ENCODE measurements at regions of chr5 and their contacts with region 1.

Region 1: GRCh38 chr5:174317259-174317894 is 271.9 kb downstream of the NSG2 start:
- DNase-seq: peak; percentile 76
- ATAC-seq: peak; percentile 97
- H3K4me3 Mint-ChIP-seq: no peak overlapping the region
- H3K27ac Mint-ChIP-seq: no peak overlapping the region
- H3K4me1 Mint-ChIP-seq: 0 out of 2 replicates have a peak, but pooled peaks cover 13% of the 10 kb centered on the region
- H3K27me3 Mint-ChIP-seq: peaks cover 22% of the 10 kb centered on the region
- CTCF ChIP-seq: peak; percentile 76

Region 2: DNA sequence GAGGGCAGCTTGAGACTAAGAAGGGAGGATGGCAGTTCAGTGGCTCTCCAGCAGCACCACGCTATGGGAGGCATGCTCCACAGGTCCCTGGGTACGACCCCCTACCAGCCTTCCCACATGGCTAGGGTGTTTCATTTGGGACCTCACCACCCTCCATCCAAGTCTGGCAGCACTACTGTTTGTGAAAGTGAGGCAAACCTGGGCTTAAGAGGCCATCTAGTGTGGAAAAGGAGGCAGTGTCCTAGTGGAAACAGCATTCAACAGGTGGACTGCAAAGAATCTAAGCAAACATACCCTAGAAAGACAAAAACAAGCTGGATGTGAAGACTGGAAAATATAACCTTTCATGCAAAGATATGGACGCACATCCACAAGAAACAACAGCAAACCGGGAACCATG is 333.2 kb before region 1 on chr5:
- CTCF ChIA-PET with region 1: interaction called, 16 read pairs
- POLR2A ChIA-PET with region 1: no interaction called
- DNase-seq: no peak
- ATAC-seq: peak; percentile 82
- H3K4me3 Mint-ChIP-seq: no peak overlapping the region
- H3K27ac Mint-ChIP-seq: no peak overlapping the region
- H3K4me1 Mint-ChIP-seq: peaks cover 16% of the 10 kb centered on the region
- H3K27me3 Mint-ChIP-seq: no peaks in the 10 kb centered on the region
- CTCF ChIP-seq: peak; percentile 40; the same call in 1 of the 2 replicates

Region 3: DNA sequence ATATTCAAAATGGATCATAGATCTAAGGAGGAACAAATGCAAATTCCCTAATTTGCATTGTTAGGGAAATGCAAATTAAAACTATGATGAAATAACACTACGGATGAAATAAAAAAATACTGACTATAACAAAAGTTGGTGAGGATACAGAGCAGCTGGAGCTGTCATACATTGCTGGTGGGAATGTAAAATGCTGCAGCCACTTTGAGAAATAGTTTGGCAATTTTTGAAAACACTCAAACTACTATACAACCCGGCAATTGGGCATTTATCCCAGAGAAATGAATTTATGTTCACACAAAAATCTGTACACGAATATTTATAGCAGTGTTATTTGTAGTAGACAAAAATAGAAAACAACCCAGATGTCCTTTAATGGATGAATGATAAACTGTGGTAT is 305.9 kb before region 1 on chr5:
- CTCF ChIA-PET with region 1: interaction called, 12 read pairs
- POLR2A ChIA-PET with region 1: no interaction called
- DNase-seq: no peak
- ATAC-seq: no peak
- H3K4me3 Mint-ChIP-seq: no peak overlapping the region
- H3K27ac Mint-ChIP-seq: no peak overlapping the region
- H3K4me1 Mint-ChIP-seq: no peaks in the 10 kb centered on the region
- H3K27me3 Mint-ChIP-seq: peaks cover 9% of the 10 kb centered on the region
- CTCF ChIP-seq: no peak

Region 4: GRCh38 chr5:174020397-174021296 is 296.7 kb before region 1 on chr5:
- CTCF ChIA-PET with region 1: interaction called, 22 read pairs
- POLR2A ChIA-PET with region 1: no interaction called
- DNase-seq: peak; percentile 61
- ATAC-seq: peak; percentile 89
- H3K4me3 Mint-ChIP-seq: peak overlapping the region; percentile 82
- H3K27ac Mint-ChIP-seq: peak overlapping the region; percentile 17; the same call in 1 of the 2 replicates
- H3K4me1 Mint-ChIP-seq: peaks cover 27% of the 10 kb centered on the region
- H3K27me3 Mint-ChIP-seq: peaks cover 7% of the 10 kb centered on the region; the same call in 1 of the 2 replicates
- CTCF ChIP-seq: peak; percentile 53

Region 5: DNA sequence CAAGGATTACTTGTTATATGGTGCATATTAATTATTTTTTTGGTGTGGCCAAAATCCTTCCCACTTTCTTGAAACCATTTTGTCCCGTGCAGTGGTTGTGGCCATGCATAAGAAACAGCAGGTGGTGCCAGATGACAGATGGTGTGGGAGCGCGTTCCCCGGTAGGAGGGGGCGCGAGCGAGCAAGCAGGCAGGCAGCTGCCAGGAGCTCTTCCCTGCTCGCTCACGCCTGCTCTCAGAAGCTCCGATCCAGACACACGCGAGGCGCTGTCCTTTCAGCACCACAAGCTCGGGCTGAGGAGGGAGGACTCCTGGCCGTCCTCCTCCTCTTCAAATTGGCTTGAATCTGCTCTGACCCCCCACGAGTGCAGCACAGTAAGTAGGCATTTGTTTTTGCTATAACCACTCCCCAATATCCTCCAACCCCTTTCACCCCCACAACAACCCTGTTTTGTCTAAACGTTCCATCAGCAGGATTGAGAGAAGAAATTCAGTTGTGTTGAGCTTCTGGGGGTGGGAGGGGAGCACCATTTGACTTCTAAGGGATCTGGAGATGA is 271.8 kb before region 1 on chr5 and contains the start of gene NSG2:
- CTCF ChIA-PET with region 1: interaction called, 159 read pairs
- POLR2A ChIA-PET with region 1: interaction called, 8 read pairs
- DNase-seq: peak; percentile 94
- ATAC-seq: peak; percentile 100
- H3K4me3 Mint-ChIP-seq: no peak within 1 kb of the TSS
- H3K27ac Mint-ChIP-seq: no peak within 1 kb of the TSS
- H3K4me1 Mint-ChIP-seq: 0 out of 2 replicates have a peak, but pooled peaks cover 4% of the 10 kb centered on the region
- H3K27me3 Mint-ChIP-seq: peaks cover 6% of the 10 kb centered on the region; the same call in 1 of the 2 replicates
- CTCF ChIP-seq: no peak
- total RNA-seq, gene NSG2: 0.14 TPM in 1 of 3 replicates, not detected in the others

Region 6: DNA sequence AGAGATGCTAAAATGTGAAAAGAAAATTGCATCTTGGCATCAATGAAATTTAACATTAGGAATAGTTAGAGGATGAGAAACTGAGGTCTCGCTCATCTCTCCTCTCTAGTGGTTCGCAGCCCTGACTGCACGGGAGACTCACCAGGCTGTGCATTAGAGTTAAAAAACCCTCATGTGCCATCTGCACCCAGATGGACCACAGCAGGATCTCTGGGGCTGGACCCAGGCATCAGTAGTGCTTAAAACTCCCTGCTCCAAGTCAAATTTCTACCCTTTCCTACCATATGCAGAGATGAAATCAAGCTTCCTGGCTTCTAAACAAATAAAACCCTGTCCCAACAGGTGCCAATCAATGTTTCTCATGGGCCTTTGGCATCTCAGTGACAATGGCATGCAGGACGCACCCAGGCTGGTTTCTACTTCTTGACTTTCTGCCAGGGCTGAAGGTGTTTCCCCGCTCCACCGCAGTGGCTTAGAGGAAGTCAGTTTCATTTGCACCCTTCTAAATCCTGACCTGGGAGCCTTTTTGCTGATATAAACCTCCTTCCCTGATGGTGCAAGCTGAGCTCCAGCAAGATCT is 139.3 kb before region 1 on chr5:
- CTCF ChIA-PET with region 1: interaction called, 11 read pairs
- POLR2A ChIA-PET with region 1: no interaction called
- DNase-seq: no peak
- ATAC-seq: no peak
- H3K4me3 Mint-ChIP-seq: no peak overlapping the region
- H3K27ac Mint-ChIP-seq: no peak overlapping the region
- H3K4me1 Mint-ChIP-seq: peaks cover 21% of the 10 kb centered on the region
- H3K27me3 Mint-ChIP-seq: peaks cover 3% of the 10 kb centered on the region; the same call in 1 of the 2 replicates
- CTCF ChIP-seq: no peak

Region 7: GRCh38 chr5:174221436-174221835 is 95.9 kb before region 1 on chr5:
- CTCF ChIA-PET with region 1: no interaction called
- POLR2A ChIA-PET with region 1: no interaction called
- DNase-seq: no peak
- ATAC-seq: no peak
- H3K4me3 Mint-ChIP-seq: no peak overlapping the region
- H3K27ac Mint-ChIP-seq: no peak overlapping the region
- H3K4me1 Mint-ChIP-seq: 0 out of 2 replicates have a peak, but pooled peaks cover 3% of the 10 kb centered on the region
- H3K27me3 Mint-ChIP-seq: peaks cover 6% of the 10 kb centered on the region; the same call in 1 of the 2 replicates
- CTCF ChIP-seq: no peak

Region 8: DNA sequence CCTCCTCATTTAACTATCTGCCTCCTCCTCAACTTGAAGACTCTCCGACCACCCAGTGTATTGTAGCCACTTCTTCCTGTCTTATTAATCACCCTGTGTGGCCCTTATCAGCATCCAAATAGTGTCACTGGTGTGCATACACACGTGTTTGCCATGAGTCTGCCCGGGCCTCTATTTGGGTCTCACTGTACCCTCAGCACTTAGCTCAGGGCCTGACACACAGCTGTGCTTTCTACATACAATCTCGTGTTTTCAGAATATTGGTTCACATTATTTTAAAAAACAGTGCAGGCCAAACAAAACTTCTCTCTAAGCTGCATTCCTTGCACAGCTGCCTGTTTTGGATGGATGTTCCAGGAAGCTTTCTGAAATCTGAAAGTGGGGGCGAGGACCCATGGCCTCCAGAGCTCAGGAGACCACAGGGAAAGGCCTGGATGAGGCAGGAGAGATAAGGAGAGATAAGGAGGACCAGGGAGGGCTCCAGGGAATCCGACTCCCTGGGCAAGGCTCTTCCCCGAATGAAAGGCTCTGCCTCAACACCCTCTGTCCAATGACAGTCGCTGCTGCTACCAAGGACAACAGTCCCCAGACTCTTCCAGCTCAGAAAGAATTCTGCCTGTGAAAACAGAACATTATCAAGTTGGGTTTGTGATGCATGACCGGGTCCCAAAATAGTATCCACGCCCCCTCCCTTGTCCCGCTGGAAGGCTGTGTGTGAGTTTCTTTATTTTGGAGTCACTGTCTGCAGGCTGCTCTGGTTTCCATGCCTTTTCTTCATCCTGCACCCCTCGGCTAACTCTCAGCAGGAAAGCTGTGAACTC is 16.2 kb before region 1 on chr5:
- CTCF ChIA-PET with region 1: interaction called, 14 read pairs
- POLR2A ChIA-PET with region 1: no interaction called
- DNase-seq: no peak
- ATAC-seq: peak; percentile 69
- H3K4me3 Mint-ChIP-seq: no peak overlapping the region
- H3K27ac Mint-ChIP-seq: no peak overlapping the region
- H3K4me1 Mint-ChIP-seq: peaks cover 20% of the 10 kb centered on the region
- H3K27me3 Mint-ChIP-seq: no peaks in the 10 kb centered on the region
- CTCF ChIP-seq: no peak

Measured in WTC11 (cell line).